Mammary epithelial cell (primary cell): ENCODE measurements at regions of chr11 and their contacts with region 1.

Region 1: DNA sequence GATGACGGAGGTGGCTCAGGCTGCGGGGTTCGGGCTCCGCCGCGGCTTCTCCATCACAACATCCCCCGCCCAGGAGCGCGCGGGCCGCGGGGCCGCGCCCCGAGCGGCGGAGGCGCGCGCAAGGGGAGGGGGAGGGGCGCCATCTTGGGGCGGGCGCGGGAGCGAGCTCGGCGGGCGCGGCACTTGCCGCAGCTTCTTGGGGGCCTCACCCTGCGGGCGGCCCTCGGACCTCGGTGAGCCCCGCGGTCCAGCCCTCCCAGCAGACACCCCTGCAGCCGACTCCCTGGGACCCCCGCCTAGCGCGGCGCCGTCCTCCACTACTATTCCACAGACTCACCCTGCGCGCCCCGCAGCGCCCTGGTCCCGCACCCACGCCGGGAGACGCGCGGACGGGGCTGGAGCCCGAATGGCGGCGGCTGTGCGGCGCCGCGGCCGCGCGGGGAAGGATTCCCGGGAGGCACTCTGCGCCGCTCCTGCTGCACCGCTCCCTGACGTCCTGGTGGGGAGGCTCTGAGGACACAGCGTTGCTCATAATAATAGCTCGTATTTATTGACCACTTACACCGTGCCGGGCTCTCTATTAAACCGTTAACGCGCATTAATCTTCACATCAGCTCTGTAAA is at the start of gene APBB1:
- DNase-seq: peak; percentile 33
- H3K4me3 ChIP-seq: peak within 1 kb of the TSS; percentile 52 to 74 (median 72)
- H3K27ac ChIP-seq: no peak within 1 kb of the TSS
- H3K4me1 ChIP-seq: peaks cover 8% of the 10 kb centered on the region
- H3K27me3 ChIP-seq: peaks cover 2% of the 10 kb centered on the region
- CTCF ChIP-seq: peak in 1 of 2 donors; percentile 26
- total RNA-seq, gene APBB1: 16.9 to 22.5 TPM

Region 2: DNA sequence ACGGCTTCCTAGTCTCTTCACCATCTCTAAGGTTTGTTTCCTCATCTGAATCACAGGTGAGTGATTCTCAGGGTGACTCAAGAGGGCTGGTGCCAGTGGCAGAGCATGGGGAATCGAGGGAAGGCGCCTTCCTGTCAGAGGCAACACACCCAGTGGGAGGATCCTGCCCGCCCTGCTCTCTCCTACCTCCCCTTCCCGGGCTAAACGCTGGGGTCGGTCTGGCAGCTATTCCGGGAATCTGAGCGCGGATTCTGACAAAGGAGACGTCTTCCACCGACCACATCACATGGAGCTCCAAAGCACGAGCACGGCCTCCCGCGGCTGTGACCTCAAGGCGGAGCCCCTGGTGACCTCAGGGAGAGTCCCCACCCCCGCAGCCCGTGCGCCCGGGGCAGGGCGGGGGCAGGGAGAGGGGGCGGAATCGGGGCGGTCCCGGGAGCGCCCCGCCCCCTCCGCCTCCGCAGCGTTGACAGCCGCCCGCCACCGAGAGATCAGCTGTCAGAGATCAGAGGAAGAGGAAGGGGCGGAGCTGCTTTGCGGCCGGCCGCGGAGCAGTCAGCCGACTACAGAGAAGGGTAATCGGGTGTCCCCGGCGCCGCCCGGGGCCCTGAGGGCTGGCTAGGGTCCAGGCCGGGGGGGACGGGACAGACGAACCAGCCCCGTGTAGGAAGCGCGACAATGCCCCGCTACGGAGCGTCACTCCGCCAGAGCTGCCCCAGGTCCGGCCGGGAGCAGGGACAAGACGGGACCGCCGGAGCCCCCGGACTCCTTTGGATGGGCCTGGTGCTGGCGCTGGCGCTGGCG is 29.0 kb before region 1 on chr11 and contains the start of gene SMPD1:
- CTCF ChIA-PET with region 1: no interaction called
- dilution Hi-C with region 1: no loop called
- in situ Hi-C with region 1: no loop called
- intact Hi-C with region 1: loop called (anchors 2 kb)
- DNase-seq: peak; percentile 95
- H3K4me3 ChIP-seq: peak within 1 kb of the TSS; percentile 65 to 93 (median 67)
- H3K27ac ChIP-seq: peak within 1 kb of the TSS; percentile 87
- H3K4me1 ChIP-seq: peaks cover 21% of the 10 kb centered on the region
- H3K27me3 ChIP-seq: no peaks in the 10 kb centered on the region
- CTCF ChIP-seq: no peak
- total RNA-seq, gene SMPD1: 17.0 to 24.1 TPM

Region 3: GRCh38 chr11:6448574-6448973 is 29.5 kb after region 1 on chr11:
- CTCF ChIA-PET with region 1: no interaction called
- dilution Hi-C with region 1: no loop called
- in situ Hi-C with region 1: no loop called
- intact Hi-C with region 1: no loop called
- DNase-seq: no peak
- H3K4me3 ChIP-seq: no peak overlapping the region
- H3K27ac ChIP-seq: no peak overlapping the region
- H3K4me1 ChIP-seq: no peaks in the 10 kb centered on the region
- H3K27me3 ChIP-seq: no peaks in the 10 kb centered on the region
- CTCF ChIP-seq: no peak

Region 4: GRCh38 chr11:6505577-6506240 is 86.6 kb after region 1 on chr11:
- CTCF ChIA-PET with region 1: no interaction called
- dilution Hi-C with region 1: no loop called
- in situ Hi-C with region 1: no loop called
- intact Hi-C with region 1: no loop called
- DNase-seq: peak; percentile 65
- H3K4me3 ChIP-seq: no peak overlapping the region
- H3K27ac ChIP-seq: no peak overlapping the region
- H3K4me1 ChIP-seq: peaks cover 9% of the 10 kb centered on the region
- H3K27me3 ChIP-seq: no peaks in the 10 kb centered on the region
- CTCF ChIP-seq: peak; percentile 74 to 79